PC-3 (cell line): ENCODE measurements at regions of chr6 and their contacts with region 1.

Region 1: GRCh38 chr6:49634092-49634840 is 2.4 kb downstream of the RHAG start:
- DNase-seq: peak; percentile 81
- ATAC-seq: peak; percentile 77
- H3K4me3 ChIP-seq: no peak overlapping the region
- H3K27ac ChIP-seq: peak overlapping the region; percentile 68
- H3K4me1 ChIP-seq: peaks cover 38% of the 10 kb centered on the region
- H3K27me3 ChIP-seq: no peaks in the 10 kb centered on the region
- CTCF ChIP-seq: no peak

Region 2: GRCh38 chr6:49401063-49401462 is 233.2 kb before region 1 on chr6:
- CTCF ChIA-PET with region 1: no interaction called
- POLR2A ChIA-PET with region 1: no interaction called
- intact Hi-C with region 1: no loop called
- DNase-seq: peak; percentile 75
- ATAC-seq: peak; percentile 57; the same call in 1 of the 2 replicates
- H3K4me3 ChIP-seq: no peak overlapping the region
- H3K27ac ChIP-seq: no peak overlapping the region
- H3K4me1 ChIP-seq: no peaks in the 10 kb centered on the region
- H3K27me3 ChIP-seq: no peaks in the 10 kb centered on the region
- CTCF ChIP-seq: no peak

Region 3: GRCh38 chr6:49570474-49571079 is 63.7 kb before region 1 on chr6:
- CTCF ChIA-PET with region 1: no interaction called
- POLR2A ChIA-PET with region 1: no interaction called
- intact Hi-C with region 1: no loop called
- DNase-seq: peak; percentile 66
- ATAC-seq: peak; percentile 51
- H3K4me3 ChIP-seq: no peak overlapping the region
- H3K27ac ChIP-seq: no peak overlapping the region
- H3K4me1 ChIP-seq: peaks cover 17% of the 10 kb centered on the region
- H3K27me3 ChIP-seq: no peaks in the 10 kb centered on the region
- CTCF ChIP-seq: peak; percentile 69

Region 4: GRCh38 chr6:49668082-49668512 is 33.8 kb after region 1 on chr6:
- CTCF ChIA-PET with region 1: no interaction called
- POLR2A ChIA-PET with region 1: no interaction called
- intact Hi-C with region 1: loop called (anchors 2 kb)
- DNase-seq: peak; percentile 92
- ATAC-seq: peak; percentile 98
- H3K4me3 ChIP-seq: peak overlapping the region; percentile 27; the same call in 1 of the 2 replicates
- H3K27ac ChIP-seq: peak overlapping the region; percentile 82
- H3K4me1 ChIP-seq: peaks cover 25% of the 10 kb centered on the region
- H3K27me3 ChIP-seq: no peaks in the 10 kb centered on the region
- CTCF ChIP-seq: no peak

Region 5: GRCh38 chr6:49744259-49744658 is 110.0 kb after region 1 on chr6 and contains the start of gene CRISP3:
- CTCF ChIA-PET with region 1: no interaction called
- POLR2A ChIA-PET with region 1: no interaction called
- intact Hi-C with region 1: no loop called
- DNase-seq: peak; percentile 80
- ATAC-seq: peak; percentile 85
- H3K4me3 ChIP-seq: no peak within 1 kb of the TSS
- H3K27ac ChIP-seq: no peak within 1 kb of the TSS
- H3K4me1 ChIP-seq: peaks cover 15% of the 10 kb centered on the region
- H3K27me3 ChIP-seq: no peaks in the 10 kb centered on the region
- CTCF ChIP-seq: no peak
- total RNA-seq, gene CRISP3: not detected in 2 replicates